PC-9 (cell line): ENCODE measurements at regions of chr7 and their contacts with region 1.

Region 1: GRCh38 chr7:100478966-100479665 is at the start of gene TSC22D4:
- DNase-seq: peak; percentile 74 to 96
- H3K4me3 ChIP-seq: peak within 1 kb of the TSS; percentile 95
- H3K27ac ChIP-seq: no peak within 1 kb of the TSS
- H3K4me1 ChIP-seq: peaks cover 26% of the 10 kb centered on the region
- H3K27me3 ChIP-seq: no peaks in the 10 kb centered on the region
- CTCF ChIP-seq: no peak
- total RNA-seq, gene TSC22D4: 68.8 and 79.8 TPM in 2 replicates

Region 2: DNA sequence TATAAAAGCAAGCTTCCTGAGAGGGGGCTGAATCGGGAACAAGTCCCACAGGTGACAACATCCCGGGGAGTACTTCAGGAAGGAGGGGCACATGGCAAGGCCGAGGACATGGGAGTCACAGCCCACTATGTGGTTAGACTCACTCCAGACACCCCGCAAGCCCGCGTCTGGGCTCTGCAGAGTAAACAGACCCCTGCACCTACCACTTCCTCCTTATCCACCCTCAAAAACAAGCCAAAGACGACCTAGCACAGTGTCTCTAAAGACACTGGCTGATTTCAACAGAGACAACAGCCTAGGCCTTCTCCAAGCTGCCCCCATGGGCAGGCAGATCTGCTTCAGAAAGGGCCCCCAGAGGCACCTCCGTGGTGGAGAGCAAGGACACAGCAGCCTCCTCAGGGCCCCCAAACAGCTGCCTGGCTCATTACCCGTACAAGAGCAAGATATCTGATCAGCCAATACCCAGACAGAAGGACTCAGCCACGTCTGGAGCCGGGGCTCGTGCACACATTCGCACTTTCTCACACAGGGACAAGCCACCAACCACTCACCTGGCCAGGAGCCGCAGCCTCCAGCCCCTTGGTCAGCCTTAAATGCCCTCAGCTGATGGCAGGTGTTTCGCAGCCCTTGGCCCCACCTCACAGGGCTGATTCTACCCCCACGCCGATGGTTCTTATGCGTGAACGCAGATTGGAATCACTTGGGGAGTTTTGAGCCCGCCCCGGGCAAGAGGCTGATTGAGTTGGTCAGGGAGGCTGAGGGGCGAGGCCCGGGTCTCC is 1260.5 kb before region 1 on chr7:
- CTCF ChIA-PET with region 1: interaction called, 10 read pairs
- POLR2A ChIA-PET with region 1: no interaction called
- intact Hi-C with region 1: no loop called
- DNase-seq: no peak
- H3K4me3 ChIP-seq: no peak overlapping the region
- H3K27ac ChIP-seq: no peak overlapping the region
- H3K4me1 ChIP-seq: peaks cover 12% of the 10 kb centered on the region
- H3K27me3 ChIP-seq: no peaks in the 10 kb centered on the region
- CTCF ChIP-seq: no peak

Region 3: DNA sequence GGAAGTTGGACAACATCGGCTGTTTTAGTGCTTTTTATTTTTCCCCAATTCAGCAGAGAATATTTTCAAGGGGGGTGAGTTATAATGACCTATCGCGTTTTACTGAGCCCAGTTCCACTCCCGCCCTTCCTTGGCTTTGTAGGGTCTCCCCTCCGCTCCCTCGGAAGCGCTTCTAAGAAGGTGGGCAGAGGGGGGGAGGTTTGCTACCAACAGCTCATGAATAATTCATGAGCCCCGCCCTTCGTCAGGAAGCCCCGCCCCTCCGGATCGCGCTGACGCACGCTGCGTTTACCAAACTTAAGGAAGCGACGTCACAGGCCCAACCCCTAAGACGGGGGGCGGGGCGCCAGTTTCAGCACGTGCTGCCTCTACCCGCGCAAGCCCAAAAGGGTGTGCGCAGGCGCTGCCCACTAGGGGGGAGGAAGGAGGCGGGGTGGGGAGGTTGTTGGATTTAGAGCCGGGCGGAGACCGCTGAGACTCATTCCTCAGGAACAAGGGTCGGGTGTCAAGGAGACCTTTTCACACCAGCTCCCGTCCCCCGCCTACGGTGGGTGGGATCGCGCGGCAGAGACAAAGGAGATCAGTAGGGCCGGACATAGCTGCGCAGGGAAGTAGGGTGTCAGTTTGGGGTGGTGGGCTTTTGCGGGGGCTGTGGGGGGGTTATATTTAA is 50.0 kb before region 1 on chr7:
- CTCF ChIA-PET with region 1: no interaction called
- POLR2A ChIA-PET with region 1: interaction called, 11 read pairs
- intact Hi-C with region 1: no loop called
- DNase-seq: peak; percentile 97 to 100
- H3K4me3 ChIP-seq: peak overlapping the region; percentile 66
- H3K27ac ChIP-seq: peak overlapping the region; percentile 93
- H3K4me1 ChIP-seq: peaks cover 37% of the 10 kb centered on the region
- H3K27me3 ChIP-seq: no peaks in the 10 kb centered on the region
- CTCF ChIP-seq: no peak; the same call in 1 of the 2 replicates

Region 4: DNA sequence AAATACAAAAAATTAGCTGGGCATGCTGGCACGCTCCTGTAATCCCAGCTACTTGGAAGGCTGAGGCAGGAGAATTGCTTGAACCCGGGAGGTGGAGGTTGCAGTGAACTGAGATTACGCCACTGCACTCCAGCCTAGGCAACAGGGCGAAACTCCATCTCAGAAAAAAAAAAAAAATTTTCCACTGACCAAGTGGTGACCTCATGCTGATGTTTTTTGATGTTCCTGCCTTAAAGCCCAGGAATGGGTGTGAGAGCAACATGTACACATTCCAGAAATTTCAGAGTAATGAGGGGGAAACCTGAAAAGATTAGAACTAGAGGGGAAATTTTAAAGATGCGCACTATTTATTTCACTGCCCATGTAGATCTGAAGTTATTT is 24.2 kb after region 1 on chr7:
- CTCF ChIA-PET with region 1: interaction called, 6 read pairs
- POLR2A ChIA-PET with region 1: no interaction called
- intact Hi-C with region 1: loop called (anchors 1 kb)
- DNase-seq: peak in 1 of 2 experiments; percentile 91
- H3K4me3 ChIP-seq: peak overlapping the region; percentile 35; the same call in 1 of the 2 replicates
- H3K27ac ChIP-seq: peak overlapping the region; percentile 98
- H3K4me1 ChIP-seq: peaks cover 44% of the 10 kb centered on the region
- H3K27me3 ChIP-seq: no peaks in the 10 kb centered on the region
- CTCF ChIP-seq: no peak

Region 5: GRCh38 chr7:100516135-100516812 is 37.2 kb after region 1 on chr7:
- CTCF ChIA-PET with region 1: interaction called, 9 read pairs
- POLR2A ChIA-PET with region 1: interaction called, 13 read pairs
- intact Hi-C with region 1: no loop called
- DNase-seq: peak; percentile 60 to 79
- H3K4me3 ChIP-seq: no peak overlapping the region
- H3K27ac ChIP-seq: no peak overlapping the region
- H3K4me1 ChIP-seq: peaks cover 25% of the 10 kb centered on the region
- H3K27me3 ChIP-seq: no peaks in the 10 kb centered on the region
- CTCF ChIP-seq: no peak

Region 6: GRCh38 chr7:100545360-100546128 is 66.4 kb after region 1 on chr7:
- CTCF ChIA-PET with region 1: interaction called, 12 read pairs
- POLR2A ChIA-PET with region 1: no interaction called
- intact Hi-C with region 1: loop called (anchors 1 kb)
- DNase-seq: peak; percentile 89 to 96
- H3K4me3 ChIP-seq: peak overlapping the region; percentile 33; the same call in 1 of the 2 replicates
- H3K27ac ChIP-seq: peak overlapping the region; percentile 98
- H3K4me1 ChIP-seq: peaks cover 84% of the 10 kb centered on the region
- H3K27me3 ChIP-seq: no peaks in the 10 kb centered on the region
- CTCF ChIP-seq: no peak

Region 7: GRCh38 chr7:100632951-100633717 is 154.0 kb after region 1 on chr7:
- CTCF ChIA-PET with region 1: no interaction called
- POLR2A ChIA-PET with region 1: interaction called, 10 read pairs
- intact Hi-C with region 1: no loop called
- DNase-seq: peak in 1 of 2 experiments; percentile 73
- H3K4me3 ChIP-seq: peak overlapping the region; percentile 65
- H3K27ac ChIP-seq: no peak overlapping the region
- H3K4me1 ChIP-seq: no peaks in the 10 kb centered on the region
- H3K27me3 ChIP-seq: no peaks in the 10 kb centered on the region
- CTCF ChIP-seq: peak; percentile 68